Breast epithelium (tissue), 4 donors: ENCODE measurements at regions of chr22 and their contacts with region 1.

Region 1: GRCh38 chr22:38201710-38202436 is at the start of gene MAFF:
- DNase-seq: peak; percentile 97 to 98
- H3K4me3 ChIP-seq: peak within 1 kb of the TSS; percentile 71 to 87 (median 82)
- H3K27ac ChIP-seq: peak within 1 kb of the TSS; percentile 99 to 100
- H3K4me1 ChIP-seq: peaks cover 9 to 16% of the 10 kb centered on the region in 2 donors
- H3K27me3 ChIP-seq: no peaks in the 10 kb centered on the region
- CTCF ChIP-seq: peak in 1 of 3 donors; percentile 13
- POLR2A ChIP-seq: peak; percentile 98
- total RNA-seq, gene MAFF: 37.3 to 126 (median 85.5) TPM

Region 2: GRCh38 chr22:38034274-38034882 is 167.5 kb before region 1 on chr22:
- intact Hi-C with region 1: no loop called
- DNase-seq: peak; percentile 74 to 86
- H3K4me3 ChIP-seq: peak overlapping the region in 1 of 3 donors; percentile 35
- H3K27ac ChIP-seq: peak overlapping the region; percentile 96
- H3K4me1 ChIP-seq: peaks cover 20 to 34% of the 10 kb centered on the region in 2 donors
- H3K27me3 ChIP-seq: no peaks in the 10 kb centered on the region
- CTCF ChIP-seq: no peak
- POLR2A ChIP-seq: no peak

Region 3: GRCh38 chr22:38051900-38052862 is 149.7 kb before region 1 on chr22:
- intact Hi-C with region 1: loop called (anchors 10 kb)
- DNase-seq: peak; percentile 68 to 80
- H3K4me3 ChIP-seq: peak overlapping the region in 1 of 3 donors; percentile 22
- H3K27ac ChIP-seq: no peak overlapping the region
- H3K4me1 ChIP-seq: no peaks in the 10 kb centered on the region
- H3K27me3 ChIP-seq: no peaks in the 10 kb centered on the region
- CTCF ChIP-seq: peak; percentile 74 to 94 (median 93)
- POLR2A ChIP-seq: no peak

Region 4: GRCh38 chr22:38317122-38317994 is 115.5 kb after region 1 on chr22 and contains the start of gene CSNK1E:
- intact Hi-C with region 1: loop called (anchors 10 kb)
- DNase-seq: peak; percentile 67 to 76
- H3K4me3 ChIP-seq: peak within 1 kb of the TSS; percentile 81 to 94 (median 84)
- H3K27ac ChIP-seq: peak within 1 kb of the TSS; percentile 97 to 98
- H3K4me1 ChIP-seq: peaks cover 0 to 25% of the 10 kb centered on the region in 2 donors
- H3K27me3 ChIP-seq: no peaks in the 10 kb centered on the region
- CTCF ChIP-seq: no peak
- POLR2A ChIP-seq: no peak
- total RNA-seq, gene CSNK1E: 83.0 to 147 (median 117) TPM